AG04450 (cell line): ENCODE measurements at regions of chr4 and their contacts with region 1.

Region 1: GRCh38 chr4:123661080-123661737 is 264.6 kb downstream of the SPRY1 start:
- DNase-seq: no peak
- H3K4me3 ChIP-seq: no peak overlapping the region
- H3K27ac ChIP-seq: no peak overlapping the region
- H3K27me3 ChIP-seq: no peaks in the 10 kb centered on the region
- CTCF ChIP-seq: peak; percentile 69

Region 2: DNA sequence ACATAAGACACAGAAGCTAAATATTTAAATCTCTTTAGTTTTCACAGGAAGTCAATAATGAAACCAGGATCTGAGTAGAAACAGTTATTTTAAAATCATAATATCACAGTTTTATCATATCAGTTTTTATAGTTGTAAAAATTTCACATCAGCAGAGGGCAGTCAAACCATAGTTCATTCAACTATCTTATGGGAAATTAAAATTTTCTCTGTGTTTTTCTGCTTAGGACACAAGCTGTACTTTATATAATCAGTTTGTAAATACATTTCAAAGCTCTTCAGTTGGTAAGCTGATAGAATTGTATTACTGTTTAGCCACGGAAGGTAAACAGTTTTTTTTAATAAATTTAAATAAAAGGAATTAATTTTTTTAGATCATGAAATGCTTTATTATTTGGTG is 534.0 kb before region 1 on chr4:
- CTCF ChIA-PET with region 1: interaction called, 12 read pairs
- POLR2A ChIA-PET with region 1: no interaction called
- DNase-seq: no peak
- H3K4me3 ChIP-seq: no peak overlapping the region
- H3K27ac ChIP-seq: no peak overlapping the region
- H3K27me3 ChIP-seq: no peaks in the 10 kb centered on the region
- CTCF ChIP-seq: peak; percentile 32

Region 3: DNA sequence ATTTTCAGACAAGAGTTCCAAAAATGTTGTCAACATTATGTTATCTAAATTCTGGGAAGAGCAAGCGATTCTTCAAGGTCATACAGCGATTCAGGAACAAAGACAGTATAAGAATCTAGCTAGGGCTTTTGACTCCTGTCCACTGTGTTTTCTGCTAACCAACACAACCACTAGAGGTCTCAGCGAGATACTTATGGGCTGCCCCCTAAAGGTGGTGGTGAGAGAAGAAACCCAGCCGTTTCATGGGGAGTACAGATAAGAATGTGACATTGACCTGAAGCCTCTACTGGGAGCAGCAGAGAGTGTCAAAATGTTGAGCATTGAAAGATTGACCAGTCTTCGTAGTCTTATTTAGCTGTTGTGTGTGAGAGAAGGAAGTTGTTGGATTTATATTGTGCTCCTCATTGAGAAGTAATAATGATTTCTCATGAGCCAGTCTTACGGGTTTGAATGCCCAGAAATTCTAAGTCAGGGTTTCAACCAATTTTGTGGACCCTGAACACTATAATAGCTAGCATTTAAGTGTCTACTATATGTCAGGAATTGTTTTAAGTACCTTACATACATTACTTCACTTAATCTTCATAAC is 96.4 kb before region 1 on chr4:
- CTCF ChIA-PET with region 1: interaction called, 17 read pairs
- POLR2A ChIA-PET with region 1: no interaction called
- DNase-seq: peak; percentile 27
- H3K4me3 ChIP-seq: no peak overlapping the region
- H3K27ac ChIP-seq: no peak overlapping the region
- H3K27me3 ChIP-seq: no peaks in the 10 kb centered on the region
- CTCF ChIP-seq: peak; percentile 89

Region 4: DNA sequence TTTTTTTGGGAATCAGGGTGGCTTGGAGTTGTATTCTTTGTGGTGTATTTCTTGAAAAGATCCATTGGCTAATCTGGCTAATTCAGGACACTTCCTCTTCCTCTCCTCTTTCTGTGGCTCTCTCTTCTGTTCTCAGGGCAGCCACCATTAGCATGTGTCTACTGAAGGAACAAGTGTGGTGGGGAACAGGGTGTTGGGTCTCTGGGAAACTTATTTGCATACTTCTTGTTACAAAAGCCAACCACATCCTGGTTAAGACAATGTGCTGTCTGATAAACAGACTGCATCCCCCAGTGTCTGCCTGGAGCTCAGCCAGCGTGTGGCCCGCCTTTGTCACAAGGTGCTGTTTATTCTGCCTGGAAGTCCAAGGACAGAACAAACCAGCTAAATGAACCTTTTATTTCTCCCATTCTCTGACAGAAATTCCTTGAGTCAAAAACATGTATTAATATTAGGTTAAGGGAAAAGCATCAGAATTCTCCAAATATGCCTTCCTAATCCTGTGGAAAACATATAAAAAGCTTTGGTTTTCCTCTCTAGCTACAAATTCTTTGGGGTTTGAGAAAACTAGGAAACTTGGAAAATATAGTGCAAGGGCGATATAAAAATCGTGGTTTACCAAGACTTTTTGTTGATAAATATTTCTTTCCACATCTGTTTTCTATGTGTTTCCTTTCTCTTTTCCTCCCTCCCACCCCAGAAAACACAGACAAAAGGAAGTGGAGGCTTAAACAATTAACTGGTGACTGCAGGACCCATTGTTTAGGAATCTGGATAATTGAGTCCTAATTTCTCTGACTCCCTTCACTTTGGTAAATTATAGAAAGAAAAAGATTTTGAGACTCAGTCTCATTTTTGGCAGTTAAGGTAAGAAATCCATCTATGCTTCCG is 61.0 kb before region 1 on chr4:
- CTCF ChIA-PET with region 1: no interaction called
- POLR2A ChIA-PET with region 1: no interaction called
- DNase-seq: no peak
- H3K4me3 ChIP-seq: no peak overlapping the region
- H3K27ac ChIP-seq: no peak overlapping the region
- H3K27me3 ChIP-seq: no peaks in the 10 kb centered on the region
- CTCF ChIP-seq: no peak

Region 5: DNA sequence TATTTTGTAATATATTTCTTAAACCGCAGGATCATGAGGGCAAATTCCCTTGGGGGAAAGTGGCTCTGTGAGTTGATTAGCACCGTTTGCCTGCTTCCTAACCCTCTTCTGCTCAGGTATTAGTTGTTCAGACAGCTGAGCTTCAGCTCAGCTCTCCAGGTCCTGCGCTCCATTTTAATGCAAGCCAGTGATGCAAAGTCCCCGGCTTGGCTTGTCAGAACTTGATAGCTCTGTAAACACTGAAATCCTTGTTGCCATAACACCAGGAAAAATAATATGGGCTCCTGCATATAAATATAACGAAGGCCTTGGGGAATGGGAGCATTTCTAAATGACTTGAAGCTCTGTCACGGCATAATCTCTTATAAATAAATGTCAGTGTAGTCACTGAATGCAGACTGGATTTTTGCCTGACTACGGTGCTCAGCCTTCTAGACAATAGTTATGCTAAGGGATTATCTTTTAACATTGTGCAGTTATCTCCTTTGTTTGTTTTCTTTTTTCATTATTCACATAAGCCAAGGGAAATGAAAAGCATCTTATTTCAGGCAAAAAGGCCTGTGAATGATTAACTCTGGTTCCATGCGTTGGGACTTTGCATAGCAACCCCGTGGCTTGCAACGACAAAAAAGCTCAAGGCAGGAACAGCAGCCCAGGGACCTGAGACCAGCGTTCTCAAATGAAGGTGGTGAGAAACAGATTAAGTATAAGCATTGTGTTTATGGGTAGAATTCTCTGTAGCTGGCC is 11.4 kb before region 1 on chr4:
- CTCF ChIA-PET with region 1: interaction called, 28 read pairs
- POLR2A ChIA-PET with region 1: no interaction called
- DNase-seq: peak; percentile 58
- H3K4me3 ChIP-seq: no peak overlapping the region
- H3K27ac ChIP-seq: no peak overlapping the region
- H3K27me3 ChIP-seq: no peaks in the 10 kb centered on the region
- CTCF ChIP-seq: no peak

Region 6: DNA sequence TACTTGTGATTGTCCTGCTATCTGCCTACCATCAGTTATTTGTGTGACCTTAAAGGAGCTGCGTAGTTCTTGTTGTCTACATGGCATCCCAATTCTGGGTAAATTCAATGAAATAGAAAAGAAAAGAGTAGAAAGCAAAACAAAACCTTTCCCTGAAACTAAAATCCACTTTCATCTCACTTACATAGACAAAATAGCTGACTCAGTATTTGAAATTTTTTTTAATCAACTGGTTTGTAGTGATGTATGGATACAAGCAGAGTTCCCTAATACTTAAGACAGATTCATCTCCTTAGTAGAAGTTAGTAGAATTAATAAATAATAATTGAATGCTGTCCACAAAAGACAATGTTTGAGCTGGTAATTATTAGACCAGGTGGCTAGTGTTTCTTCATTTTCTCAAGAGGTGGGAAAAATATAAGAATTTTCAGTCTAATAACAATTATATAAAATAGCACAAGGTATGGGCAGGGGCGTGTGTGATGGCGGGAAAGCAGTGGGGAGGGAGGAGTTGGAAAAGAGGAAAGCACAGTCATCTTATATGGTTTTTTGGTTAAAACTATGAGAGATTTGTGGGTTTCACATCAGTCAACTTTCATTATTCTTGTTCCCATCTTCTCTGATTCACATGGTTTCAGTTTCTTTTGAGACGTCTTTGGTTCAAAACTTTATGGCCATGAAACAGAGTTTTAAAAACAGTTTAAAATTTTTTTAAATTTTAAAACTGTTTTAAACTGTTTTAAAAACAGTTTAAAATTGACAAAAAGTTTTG is 10.6 kb after region 1 on chr4:
- CTCF ChIA-PET with region 1: interaction called, 25 read pairs
- POLR2A ChIA-PET with region 1: no interaction called
- DNase-seq: no peak
- H3K4me3 ChIP-seq: no peak overlapping the region
- H3K27ac ChIP-seq: no peak overlapping the region
- H3K27me3 ChIP-seq: no peaks in the 10 kb centered on the region
- CTCF ChIP-seq: no peak